RWPE1 (cell line): ENCODE measurements at regions of chr10 and their contacts with region 1.

Region 1: GRCh38 chr10:101214446-101215396 is 14.5 kb downstream of the LBX1 start:
- DNase-seq: peak; percentile 74
- H3K27ac ChIP-seq: no peak overlapping the region
- CTCF ChIP-seq: peak; percentile 90

Region 2: DNA sequence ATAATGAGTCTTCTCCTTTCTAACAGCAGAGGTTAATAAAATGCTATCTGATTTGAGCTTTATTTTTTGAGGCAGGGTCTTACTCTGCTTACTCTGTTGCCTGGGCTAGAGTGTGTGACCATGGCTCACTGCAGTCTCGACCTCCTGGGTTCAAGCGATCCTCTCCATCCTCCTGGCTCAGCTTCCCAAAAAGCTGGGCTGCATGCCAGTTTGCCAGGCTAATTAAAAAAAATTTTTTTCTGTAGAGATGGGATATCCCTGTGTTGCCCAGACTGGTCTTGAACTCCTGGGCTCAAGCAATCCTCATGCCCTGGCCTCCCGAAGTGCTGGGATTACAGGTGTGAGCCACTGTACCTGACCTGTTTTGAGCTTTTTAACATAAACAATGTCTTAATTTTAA is 811.0 kb before region 1 on chr10:
- CTCF ChIA-PET with region 1: no interaction called
- POLR2A ChIA-PET with region 1: no interaction called
- DNase-seq: no peak
- H3K27ac ChIP-seq: no peak overlapping the region
- CTCF ChIP-seq: no peak

Region 3: DNA sequence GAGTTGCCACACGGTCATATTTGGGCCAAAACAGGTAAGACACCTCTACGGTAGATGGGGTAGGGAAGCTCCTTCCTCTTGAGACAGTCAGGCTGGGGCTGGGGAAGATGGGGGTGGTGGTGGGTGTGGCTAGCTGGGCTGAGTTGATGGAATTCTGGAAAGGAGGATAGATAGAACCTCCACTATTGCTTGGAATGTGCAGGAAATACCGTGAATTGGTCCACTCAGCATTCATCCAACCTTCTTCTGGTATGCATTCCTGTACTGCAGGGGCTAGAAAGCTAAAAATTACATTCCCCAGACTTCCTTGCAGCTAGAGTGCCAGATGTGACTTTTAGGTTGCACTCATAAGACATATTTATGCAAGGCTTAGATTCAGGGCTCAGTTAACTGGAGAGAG is 58.8 kb before region 1 on chr10:
- CTCF ChIA-PET with region 1: interaction called, 13 read pairs
- POLR2A ChIA-PET with region 1: no interaction called
- DNase-seq: no peak
- H3K27ac ChIP-seq: no peak overlapping the region
- CTCF ChIP-seq: no peak

Region 4: GRCh38 chr10:101291331-101292193 is 76.8 kb after region 1 on chr10:
- CTCF ChIA-PET with region 1: interaction called, 108 read pairs
- POLR2A ChIA-PET with region 1: no interaction called
- DNase-seq: peak; percentile 55
- H3K27ac ChIP-seq: no peak overlapping the region
- CTCF ChIP-seq: peak; percentile 62

Region 5: DNA sequence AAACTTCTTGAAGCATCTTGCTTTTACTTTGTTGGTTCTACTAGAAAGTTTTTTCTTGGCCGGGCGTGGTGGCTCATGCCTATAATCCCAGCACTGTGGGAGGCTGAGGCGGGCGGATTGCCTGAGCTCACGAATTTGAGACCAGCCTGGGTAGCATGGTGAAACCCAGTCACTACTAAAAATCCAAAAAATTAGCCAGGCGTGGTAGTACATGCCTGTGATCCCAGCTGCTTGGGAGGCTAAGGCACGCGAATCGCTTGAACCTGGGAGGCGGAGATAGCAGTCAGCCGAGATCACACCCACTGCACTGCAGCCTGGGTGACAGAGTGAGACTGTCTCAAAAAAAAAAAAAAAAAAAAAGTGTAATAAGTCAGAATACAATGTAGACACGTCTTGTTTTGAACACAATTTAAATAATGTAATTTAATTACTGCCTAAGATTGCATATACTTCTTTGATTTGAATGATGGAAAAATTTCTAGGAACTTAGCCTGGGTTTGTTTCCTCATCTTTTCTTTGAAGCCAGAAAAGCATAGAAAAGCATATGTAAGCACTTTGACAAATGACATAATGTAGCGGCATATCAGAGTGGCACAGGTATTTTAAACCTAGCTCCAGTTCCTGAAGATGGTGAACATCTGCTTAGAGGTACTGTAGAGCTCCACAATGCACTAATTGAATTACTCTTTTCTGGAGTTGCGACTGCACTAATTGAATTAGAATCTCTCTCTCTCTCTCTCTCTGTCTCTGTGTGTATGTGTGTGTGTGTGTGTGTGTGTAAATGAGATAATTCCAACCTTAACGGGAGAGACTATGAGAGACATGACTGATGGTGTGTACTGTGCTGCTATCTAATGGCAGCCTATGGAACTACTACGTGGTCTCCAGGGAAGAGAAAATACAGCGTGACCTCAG is 227.1 kb after region 1 on chr10:
- CTCF ChIA-PET with region 1: interaction called, 20 read pairs
- POLR2A ChIA-PET with region 1: no interaction called
- DNase-seq: peak; percentile 79
- H3K27ac ChIP-seq: no peak overlapping the region
- CTCF ChIP-seq: peak; percentile 75

Region 6: DNA sequence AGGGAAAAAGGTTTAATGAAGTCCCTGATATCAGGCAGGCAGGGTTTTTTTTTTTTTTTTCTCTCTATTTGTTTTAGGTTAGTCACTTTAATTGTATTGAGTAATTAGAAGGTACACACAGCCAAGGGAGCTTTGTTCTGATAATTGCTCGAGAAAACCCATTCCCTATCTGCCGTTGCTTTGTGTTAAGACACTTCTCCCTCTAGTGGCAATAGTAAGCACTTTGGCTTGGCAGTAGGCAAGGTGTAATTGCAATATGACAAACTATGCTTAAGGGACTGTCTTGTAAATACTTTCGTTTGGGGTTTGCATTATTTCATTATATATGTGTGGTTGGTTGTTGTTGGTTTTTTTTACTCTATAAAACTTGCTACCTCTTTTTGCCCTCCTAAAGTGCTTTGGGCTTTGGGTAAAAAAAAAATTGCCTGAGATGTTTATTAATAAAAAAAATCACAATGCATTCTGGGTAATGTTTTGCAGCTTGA is 252.6 kb after region 1 on chr10:
- CTCF ChIA-PET with region 1: interaction called, 50 read pairs
- POLR2A ChIA-PET with region 1: no interaction called
- DNase-seq: peak; percentile 72
- H3K27ac ChIP-seq: no peak overlapping the region
- CTCF ChIP-seq: peak; percentile 91

Region 7: DNA sequence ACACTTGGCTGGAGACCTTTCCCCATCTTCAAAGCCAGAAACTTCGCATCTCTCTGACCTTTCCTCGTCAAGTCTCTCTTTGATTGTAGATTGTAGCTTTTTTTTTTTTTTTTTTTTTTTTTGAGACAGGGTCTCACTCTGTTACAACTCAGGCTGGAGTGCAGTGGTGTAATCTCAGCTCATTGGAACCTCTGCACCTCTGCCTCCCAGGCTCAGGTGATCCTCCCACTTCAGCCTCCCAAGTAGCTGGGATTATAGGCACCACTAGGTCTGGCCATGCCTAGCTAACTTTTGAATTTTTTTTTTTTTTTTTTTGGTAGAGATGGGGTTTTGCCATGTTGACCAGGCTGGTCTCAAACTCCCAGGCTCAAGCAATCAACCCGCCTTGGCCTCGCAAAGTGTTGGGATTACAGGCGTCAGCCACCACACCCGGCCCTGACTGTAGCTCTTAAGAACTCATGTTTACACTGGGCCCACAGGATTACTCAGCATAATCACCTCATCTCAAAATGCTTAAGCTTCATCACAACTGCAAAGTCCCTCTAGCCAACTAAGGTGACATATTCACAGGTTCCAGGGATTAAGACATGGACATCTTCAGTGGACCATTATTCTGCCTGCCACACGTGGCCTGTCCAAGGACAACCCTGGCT is 361.6 kb after region 1 on chr10:
- CTCF ChIA-PET with region 1: interaction called, 43 read pairs
- POLR2A ChIA-PET with region 1: no interaction called
- DNase-seq: no peak
- H3K27ac ChIP-seq: no peak overlapping the region
- CTCF ChIP-seq: no peak